Natural killer cell (primary cell): ENCODE measurements at regions of chr2 and their contacts with region 1.

Region 1: DNA sequence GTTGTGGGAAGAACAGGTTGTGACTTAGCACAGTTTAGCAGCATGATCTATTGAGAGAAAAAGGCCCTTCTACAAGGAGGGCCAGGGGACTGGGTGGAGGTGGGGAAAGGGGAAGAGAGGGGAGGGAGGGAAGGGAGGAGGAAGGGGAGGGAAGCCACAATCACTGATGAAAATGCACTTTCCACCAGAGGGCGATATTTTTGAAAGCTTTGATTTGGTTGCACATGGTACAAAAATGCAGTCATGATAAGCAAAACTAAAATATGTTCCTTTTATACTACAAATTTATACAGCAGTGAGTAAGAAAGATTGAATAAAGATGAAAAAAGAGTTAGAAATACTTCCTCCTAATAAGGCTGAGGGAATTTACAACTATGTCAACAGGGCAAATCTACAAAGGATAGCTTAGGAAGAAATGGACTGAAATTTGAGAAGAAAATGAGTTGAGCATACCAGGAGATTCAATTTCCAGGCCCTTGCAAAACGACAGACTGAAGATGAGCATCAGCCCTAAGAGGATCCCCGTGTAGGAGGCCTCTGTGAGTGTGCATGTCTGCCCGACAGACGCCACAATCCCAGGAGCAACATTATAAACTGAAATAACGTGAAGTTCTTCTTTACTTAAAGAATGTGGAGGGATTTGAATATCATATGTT is 17.2 kb downstream of the SH3YL1 start:
- DNase-seq: peak in 1 of 2 donors; percentile 77
- ATAC-seq: peak in 2 of 3 donors; percentile 61 to 63
- H3K4me3 ChIP-seq: no peak overlapping the region
- H3K4me3 Mint-ChIP-seq: no peak overlapping the region
- H3K27ac ChIP-seq: no peak overlapping the region
- H3K27ac Mint-ChIP-seq: peak overlapping the region in 1 of 2 donors; percentile 44
- H3K4me1 ChIP-seq: peaks cover 11% of the 10 kb centered on the region
- H3K4me1 Mint-ChIP-seq: peaks cover 18 to 19% of the 10 kb centered on the region in 2 donors
- H3K27me3 ChIP-seq: no peaks in the 10 kb centered on the region
- H3K27me3 Mint-ChIP-seq: no peaks in the 10 kb centered on the region
- CTCF ChIP-seq: peak; percentile 72

Region 2: GRCh38 chr2:169741-170140 is 76.9 kb before region 1 on chr2:
- intact Hi-C with region 1: no loop called
- DNase-seq: no peak
- ATAC-seq: no peak
- H3K4me3 ChIP-seq: no peak overlapping the region
- H3K4me3 Mint-ChIP-seq: no peak overlapping the region
- H3K27ac ChIP-seq: no peak overlapping the region
- H3K27ac Mint-ChIP-seq: no peak overlapping the region
- H3K4me1 ChIP-seq: peaks cover 5% of the 10 kb centered on the region
- H3K4me1 Mint-ChIP-seq: peaks cover 17 to 22% of the 10 kb centered on the region in 2 donors
- H3K27me3 ChIP-seq: peaks cover 2% of the 10 kb centered on the region
- H3K27me3 Mint-ChIP-seq: peaks cover 7 to 13% of the 10 kb centered on the region in 2 donors
- CTCF ChIP-seq: no peak

Region 3: DNA sequence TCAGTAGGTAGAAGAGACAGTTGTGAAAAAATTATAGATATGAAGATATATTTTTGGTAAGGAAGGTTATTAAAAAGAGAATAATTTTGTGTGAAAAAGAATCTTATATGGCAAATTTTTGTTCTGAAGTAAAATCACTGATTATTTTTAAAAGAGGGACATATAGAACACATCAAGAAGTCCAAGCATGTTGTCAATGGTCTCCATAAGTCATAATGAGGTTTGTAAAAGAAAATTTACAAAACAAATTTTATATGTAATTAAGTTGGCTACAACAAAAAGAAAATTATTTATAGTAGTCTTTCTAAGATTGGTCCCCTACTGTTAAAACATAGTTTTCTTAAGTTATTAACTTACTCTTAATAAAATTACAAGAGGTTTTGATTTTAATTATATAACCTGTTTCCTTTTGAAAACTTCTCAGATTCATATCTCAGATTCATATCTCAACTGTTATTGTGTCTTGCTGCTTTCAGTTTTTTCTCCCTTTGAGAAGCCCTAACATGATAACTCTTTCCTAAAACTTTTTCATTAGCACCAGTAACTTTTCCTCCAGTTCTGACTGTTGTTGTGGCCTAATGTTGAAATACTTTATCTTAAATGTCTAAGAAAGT is 64.0 kb before region 1 on chr2:
- intact Hi-C with region 1: no loop called
- DNase-seq: no peak
- ATAC-seq: no peak
- H3K4me3 ChIP-seq: no peak overlapping the region
- H3K4me3 Mint-ChIP-seq: peak overlapping the region; percentile 50
- H3K27ac ChIP-seq: no peak overlapping the region
- H3K27ac Mint-ChIP-seq: no peak overlapping the region
- H3K4me1 ChIP-seq: peaks cover 4% of the 10 kb centered on the region
- H3K4me1 Mint-ChIP-seq: peaks cover 41 to 45% of the 10 kb centered on the region in 2 donors
- H3K27me3 ChIP-seq: no peaks in the 10 kb centered on the region
- H3K27me3 Mint-ChIP-seq: no peaks in the 10 kb centered on the region
- CTCF ChIP-seq: no peak

Region 4: DNA sequence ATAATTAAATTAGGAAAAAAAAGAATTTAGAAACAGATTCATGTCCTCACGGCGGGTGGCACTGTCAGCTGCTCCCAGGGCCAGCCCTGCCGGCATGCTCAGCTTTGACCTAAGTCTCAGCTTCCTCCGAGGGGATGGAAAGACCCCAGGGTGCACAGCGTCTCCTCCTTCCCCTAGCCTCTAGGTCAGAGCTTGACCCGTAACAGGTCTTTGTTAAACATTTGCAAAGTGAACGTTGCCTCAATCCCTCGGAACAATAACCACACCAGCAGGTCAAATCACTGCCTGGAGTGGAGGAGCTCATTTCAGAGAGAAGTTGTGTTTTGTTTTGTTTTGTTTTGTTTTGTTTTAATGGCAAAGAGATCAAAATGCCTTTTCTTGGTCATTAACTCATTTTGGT is 259.3 kb after region 1 on chr2:
- intact Hi-C with region 1: no loop called
- DNase-seq: no peak
- ATAC-seq: no peak
- H3K4me3 ChIP-seq: no peak overlapping the region
- H3K4me3 Mint-ChIP-seq: no peak overlapping the region
- H3K27ac ChIP-seq: no peak overlapping the region
- H3K27ac Mint-ChIP-seq: no peak overlapping the region
- H3K4me1 ChIP-seq: no peaks in the 10 kb centered on the region
- H3K4me1 Mint-ChIP-seq: peaks cover 3 to 8% of the 10 kb centered on the region in 2 donors
- H3K27me3 ChIP-seq: no peaks in the 10 kb centered on the region
- H3K27me3 Mint-ChIP-seq: peaks cover 13 to 15% of the 10 kb centered on the region in 2 donors
- CTCF ChIP-seq: no peak

Region 5: GRCh38 chr2:636641-637405 is 390.2 kb after region 1 on chr2:
- intact Hi-C with region 1: loop called (anchors 2 kb)
- DNase-seq: peak; percentile 53 to 73
- ATAC-seq: peak; percentile 51 to 85 (median 78)
- H3K4me3 ChIP-seq: peak overlapping the region; percentile 49
- H3K4me3 Mint-ChIP-seq: peak overlapping the region; percentile 85
- H3K27ac ChIP-seq: no peak overlapping the region
- H3K27ac Mint-ChIP-seq: peak overlapping the region in 1 of 2 donors; percentile 87
- H3K4me1 ChIP-seq: peaks cover 8% of the 10 kb centered on the region
- H3K4me1 Mint-ChIP-seq: peaks cover 0 to 7% of the 10 kb centered on the region in 2 donors
- H3K27me3 ChIP-seq: no peaks in the 10 kb centered on the region
- H3K27me3 Mint-ChIP-seq: peaks cover 0 to under 1% of the 10 kb centered on the region in 2 donors
- CTCF ChIP-seq: peak; percentile 99

Region 6: GRCh38 chr2:650343-651310 is 404.0 kb after region 1 on chr2:
- intact Hi-C with region 1: no loop called
- DNase-seq: no peak
- ATAC-seq: no peak
- H3K4me3 ChIP-seq: no peak overlapping the region
- H3K4me3 Mint-ChIP-seq: no peak overlapping the region
- H3K27ac ChIP-seq: no peak overlapping the region
- H3K27ac Mint-ChIP-seq: no peak overlapping the region
- H3K4me1 ChIP-seq: peaks cover 27% of the 10 kb centered on the region
- H3K4me1 Mint-ChIP-seq: peaks cover 18 to 29% of the 10 kb centered on the region in 2 donors
- H3K27me3 ChIP-seq: no peaks in the 10 kb centered on the region
- H3K27me3 Mint-ChIP-seq: peaks cover 0 to 11% of the 10 kb centered on the region in 2 donors
- CTCF ChIP-seq: no peak